HCT116 (cell line): ENCODE measurements at regions of chr7 and their contacts with region 1.

Region 1: GRCh38 chr7:76314042-76314721 is 11.7 kb downstream of the HSPB1 start:
- DNase-seq: peak; percentile 88
- ATAC-seq: peak; percentile 68
- H3K4me3 ChIP-seq: peak overlapping the region in 1 of 2 experiments; percentile 35; a peak in 1 of 4 replicates
- H3K27ac ChIP-seq: peak overlapping the region; percentile 34; the same call in 1 of the 2 replicates
- H3K4me1 ChIP-seq: peaks cover 30 to 48% of the 10 kb centered on the region in 2 experiments
- H3K27me3 ChIP-seq: no peaks in the 10 kb centered on the region
- CTCF ChIP-seq: peak in 2 of 3 experiments; percentile 100; a peak in 4 of 6 replicates
- POLR2A ChIP-seq: no peak
- RAD21 ChIP-seq: no peak

Region 2: GRCh38 chr7:76179686-76180085 is 134.5 kb before region 1 on chr7:
- CTCF ChIA-PET with region 1: interaction called, 39 read pairs
- POLR2A ChIA-PET with region 1: interaction called, 5 read pairs
- RAD21 ChIA-PET with region 1: interaction called, 13 to 14 read pairs
- intact Hi-C with region 1: loop called (anchors 1 kb)
- DNase-seq: no peak
- ATAC-seq: no peak
- H3K4me3 ChIP-seq: no peak overlapping the region
- H3K27ac ChIP-seq: no peak overlapping the region
- H3K4me1 ChIP-seq: peaks cover 3 to 13% of the 10 kb centered on the region in 2 experiments; a peak in 2 of 4 replicates
- H3K27me3 ChIP-seq: no peaks in the 10 kb centered on the region
- CTCF ChIP-seq: no peak
- POLR2A ChIP-seq: no peak
- RAD21 ChIP-seq: no peak

Region 3: DNA sequence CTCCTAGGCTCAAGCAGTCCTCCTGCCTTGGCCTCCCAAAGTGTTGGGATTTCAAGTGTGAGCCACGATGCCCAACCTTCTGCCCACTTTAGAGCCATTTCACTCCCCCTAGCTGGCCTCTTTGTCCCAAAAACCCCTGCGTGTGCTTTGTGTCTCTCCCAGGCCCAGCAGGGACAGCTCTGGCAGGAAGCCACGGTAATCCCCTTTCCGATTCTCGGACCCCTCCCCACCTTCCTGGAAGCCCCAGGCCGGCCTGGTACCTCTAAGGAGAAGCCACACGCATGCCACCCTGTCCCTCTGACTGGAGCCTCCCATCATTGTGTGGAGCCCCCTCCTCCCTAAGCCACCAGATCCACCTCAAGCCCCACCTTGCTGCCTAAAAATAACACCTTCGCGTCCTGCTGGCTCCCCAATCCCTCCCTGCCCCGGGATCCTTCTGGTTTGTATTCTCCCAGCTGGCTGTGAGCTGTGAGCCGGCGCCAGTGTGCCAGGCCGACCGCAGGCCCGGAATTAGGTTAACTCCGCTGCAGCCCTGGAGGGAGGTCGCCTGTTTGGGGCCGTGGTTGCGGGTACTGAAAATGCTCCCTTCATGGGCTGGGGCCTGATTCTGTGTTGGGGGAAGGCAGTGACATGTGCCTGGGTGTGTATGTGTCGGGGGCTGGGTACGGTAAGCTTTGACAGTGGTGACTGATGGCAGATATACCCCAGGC is 128.8 kb before region 1 on chr7:
- CTCF ChIA-PET with region 1: interaction called, 10 read pairs
- POLR2A ChIA-PET with region 1: no interaction called
- RAD21 ChIA-PET with region 1: interaction called in 1 of 2 experiments, 6 read pairs
- intact Hi-C with region 1: no loop called
- DNase-seq: no peak
- ATAC-seq: no peak
- H3K4me3 ChIP-seq: no peak overlapping the region
- H3K27ac ChIP-seq: no peak overlapping the region
- H3K4me1 ChIP-seq: no peaks in the 10 kb centered on the region
- H3K27me3 ChIP-seq: no peaks in the 10 kb centered on the region
- CTCF ChIP-seq: no peak
- POLR2A ChIP-seq: no peak
- RAD21 ChIP-seq: no peak

Region 4: DNA sequence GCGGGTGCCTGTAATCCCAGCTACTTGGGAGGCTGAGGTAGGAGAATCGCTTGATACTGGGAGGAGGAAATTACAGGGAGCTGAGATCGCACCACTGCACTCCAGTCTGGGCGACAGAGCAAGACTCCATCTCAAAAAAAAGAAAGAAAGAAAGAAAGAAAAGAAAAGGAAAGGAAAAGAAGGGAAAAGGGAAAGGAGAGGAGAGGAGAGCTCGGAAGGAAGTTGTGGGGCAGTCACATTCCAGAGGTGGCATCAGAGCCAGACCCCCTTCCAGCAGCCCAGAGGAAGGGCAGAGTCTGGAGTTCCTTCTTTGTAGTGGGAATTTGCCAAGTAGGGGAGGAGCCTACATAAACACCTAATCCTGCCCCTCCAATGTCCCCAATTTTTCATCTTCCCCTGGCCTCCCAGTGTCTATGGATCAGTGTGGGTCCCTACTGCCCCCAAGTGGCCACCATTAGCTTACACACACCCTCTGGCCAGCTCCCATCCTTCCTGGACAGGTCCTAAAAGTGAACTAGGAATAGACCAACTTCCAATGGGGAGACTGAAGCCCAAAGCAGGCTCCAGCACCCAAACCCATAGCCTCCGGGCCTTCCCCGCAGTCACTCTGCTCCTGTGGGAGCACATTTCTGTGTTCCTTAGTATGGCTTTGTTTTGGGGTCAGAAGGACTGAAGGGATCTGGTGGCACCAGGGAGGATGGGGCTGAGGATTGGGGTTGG is 51.3 kb before region 1 on chr7:
- CTCF ChIA-PET with region 1: interaction called, 18 read pairs
- POLR2A ChIA-PET with region 1: interaction called, 4 read pairs
- RAD21 ChIA-PET with region 1: interaction called, 4 to 12 read pairs
- intact Hi-C with region 1: loop called (anchors 1 kb)
- DNase-seq: peak; percentile 69
- ATAC-seq: peak; percentile 91
- H3K4me3 ChIP-seq: no peak overlapping the region
- H3K27ac ChIP-seq: no peak overlapping the region
- H3K4me1 ChIP-seq: peaks cover 4 to 19% of the 10 kb centered on the region in 2 experiments; a peak in 3 of 4 replicates
- H3K27me3 ChIP-seq: no peaks in the 10 kb centered on the region
- CTCF ChIP-seq: peak; percentile 86 to 92 (median 91)
- POLR2A ChIP-seq: no peak
- RAD21 ChIP-seq: peak; percentile 89

Region 5: GRCh38 chr7:76291343-76292212 is 22.6 kb before region 1 on chr7:
- CTCF ChIA-PET with region 1: interaction called, 64 read pairs
- POLR2A ChIA-PET with region 1: interaction called, 6 read pairs
- RAD21 ChIA-PET with region 1: interaction called, 14 to 16 read pairs
- intact Hi-C with region 1: loop called (anchors 1 kb)
- DNase-seq: peak; percentile 95
- ATAC-seq: peak; percentile 77
- H3K4me3 ChIP-seq: peak overlapping the region; percentile 43 to 45
- H3K27ac ChIP-seq: peak overlapping the region; percentile 99
- H3K4me1 ChIP-seq: peaks cover 65 to 80% of the 10 kb centered on the region in 2 experiments
- H3K27me3 ChIP-seq: no peaks in the 10 kb centered on the region
- CTCF ChIP-seq: peak in 2 of 3 experiments; percentile 95 to 97; a peak in 4 of 6 replicates
- POLR2A ChIP-seq: no peak
- RAD21 ChIP-seq: no peak

Region 6: DNA sequence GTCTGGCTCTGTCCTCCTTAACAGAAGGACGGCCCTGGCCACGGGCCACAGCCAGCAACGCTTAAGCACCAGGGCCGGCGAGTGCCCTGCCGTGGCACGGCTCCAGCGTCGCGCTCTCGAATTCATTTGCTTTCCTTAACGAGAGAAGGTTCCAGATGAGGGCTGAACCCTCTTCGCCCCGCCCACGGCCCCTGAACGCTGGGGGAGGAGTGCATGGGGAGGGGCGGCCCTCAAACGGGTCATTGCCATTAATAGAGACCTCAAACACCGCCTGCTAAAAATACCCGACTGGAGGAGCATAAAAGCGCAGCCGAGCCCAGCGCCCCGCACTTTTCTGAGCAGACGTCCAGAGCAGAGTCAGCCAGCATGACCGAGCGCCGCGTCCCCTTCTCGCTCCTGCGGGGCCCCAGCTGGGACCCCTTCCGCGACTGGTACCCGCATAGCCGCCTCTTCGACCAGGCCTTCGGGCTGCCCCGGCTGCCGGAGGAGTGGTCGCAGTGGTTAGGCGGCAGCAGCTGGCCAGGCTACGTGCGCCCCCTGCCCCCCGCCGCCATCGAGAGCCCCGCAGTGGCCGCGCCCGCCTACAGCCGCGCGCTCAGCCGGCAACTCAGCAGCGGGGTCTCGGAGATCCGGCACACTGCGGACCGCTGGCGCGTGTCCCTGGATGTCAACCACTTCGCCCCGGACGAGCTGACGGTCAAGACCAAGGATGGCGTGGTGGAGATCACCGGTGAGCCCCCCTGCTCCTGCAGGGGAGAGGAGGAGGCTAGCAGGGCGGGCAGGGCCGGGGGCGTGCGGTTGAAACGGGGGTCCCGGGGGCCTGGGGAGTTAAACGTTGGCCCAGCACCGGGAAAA is 11.6 kb before region 1 on chr7 and contains the start of gene HSPB1:
- CTCF ChIA-PET with region 1: interaction called, 12 read pairs
- POLR2A ChIA-PET with region 1: interaction called, 5 read pairs
- RAD21 ChIA-PET with region 1: interaction called in 1 of 2 experiments, 4 read pairs
- intact Hi-C with region 1: no loop called
- DNase-seq: peak; percentile 79
- ATAC-seq: peak; percentile 67
- H3K4me3 ChIP-seq: peak within 1 kb of the TSS; percentile 86 to 94
- H3K27ac ChIP-seq: peak within 1 kb of the TSS; percentile 95
- H3K4me1 ChIP-seq: peaks cover 45 to 75% of the 10 kb centered on the region in 2 experiments
- H3K27me3 ChIP-seq: no peaks in the 10 kb centered on the region
- CTCF ChIP-seq: no peak
- POLR2A ChIP-seq: peak; percentile 86
- RAD21 ChIP-seq: no peak
- total RNA-seq, gene HSPB1: 524 TPM

Region 7: DNA sequence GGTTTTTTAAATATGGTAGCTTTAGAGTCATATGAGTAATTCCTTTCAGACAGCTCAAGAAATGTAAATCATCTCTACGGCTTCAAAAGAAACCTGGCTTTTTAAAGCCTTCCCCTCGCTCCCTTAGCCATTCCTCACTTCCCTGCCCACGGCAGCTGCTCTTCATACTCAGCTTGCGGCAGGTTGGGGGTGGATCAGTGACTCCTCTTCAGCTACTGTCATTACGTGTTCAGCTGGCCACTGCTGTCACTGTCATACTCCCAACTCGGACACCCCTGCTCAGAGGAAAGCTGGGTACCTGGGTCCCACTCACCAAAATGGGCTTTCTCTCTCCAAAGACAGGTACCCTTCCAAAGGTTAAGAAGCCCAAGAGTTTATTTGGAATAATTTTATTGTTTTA is 38.0 kb after region 1 on chr7:
- CTCF ChIA-PET with region 1: no interaction called
- POLR2A ChIA-PET with region 1: no interaction called
- RAD21 ChIA-PET with region 1: no interaction called
- intact Hi-C with region 1: no loop called
- DNase-seq: no peak
- ATAC-seq: 0 out of 2 replicates have a peak, but pooled peaks have one; percentile 19
- H3K4me3 ChIP-seq: no peak overlapping the region
- H3K27ac ChIP-seq: no peak overlapping the region
- H3K4me1 ChIP-seq: peaks cover 5 to 35% of the 10 kb centered on the region in 2 experiments; a peak in 3 of 4 replicates
- H3K27me3 ChIP-seq: no peaks in the 10 kb centered on the region
- CTCF ChIP-seq: no peak
- POLR2A ChIP-seq: no peak
- RAD21 ChIP-seq: no peak